HEK293 (cell line): ENCODE measurements at regions of chr17 and their contacts with region 1.

Region 1: DNA sequence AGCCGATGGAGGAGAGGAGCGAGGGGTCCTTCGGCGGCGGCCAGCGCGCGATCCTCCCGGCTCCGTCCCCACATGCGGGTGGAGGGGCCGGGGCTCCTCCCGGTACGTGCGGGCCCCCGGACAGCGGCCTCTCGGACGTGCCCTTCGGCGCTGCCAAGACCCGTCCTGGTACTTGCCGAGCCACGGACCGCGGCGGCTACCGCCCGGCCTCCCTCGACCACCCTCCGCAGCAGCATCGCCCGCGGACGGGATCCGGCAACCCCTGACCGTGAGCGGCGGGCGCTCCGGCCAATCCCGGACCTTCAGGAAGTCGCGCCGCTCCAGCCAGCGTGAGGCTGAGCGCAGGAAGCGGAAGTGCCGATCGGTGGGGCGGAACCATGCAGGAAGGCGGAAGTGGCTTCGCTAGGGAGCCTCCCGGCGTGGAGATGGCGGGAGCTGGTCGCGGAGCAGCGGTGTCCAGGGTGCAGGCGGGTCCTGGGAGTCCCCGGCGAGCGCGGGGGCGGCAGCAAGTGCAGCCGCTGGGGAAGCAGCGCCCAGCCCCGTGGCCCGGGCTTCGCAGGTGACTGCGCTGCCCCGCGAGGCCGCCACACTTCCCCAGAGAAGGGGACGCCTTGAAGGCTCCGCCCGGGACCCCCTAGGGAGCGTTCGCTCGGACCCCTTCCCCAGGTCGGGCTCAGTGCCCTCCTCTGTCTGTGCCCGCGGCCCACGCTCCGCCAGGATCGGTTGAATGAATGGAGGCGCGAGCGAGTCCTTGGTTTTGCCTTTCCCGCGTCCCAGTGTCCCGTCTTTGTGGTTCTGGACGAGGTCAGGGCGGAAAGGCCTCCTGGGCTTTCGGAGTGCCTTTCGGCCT is at the starts of genes CCDC137 and OXLD1:
- H3K4me3 ChIP-seq: peak within 1 kb of the TSS; percentile 88
- H3K27ac ChIP-seq: peak within 1 kb of the TSS; percentile 90
- H3K4me1 ChIP-seq: peaks cover 5% of the 10 kb centered on the region; the same call in 1 of the 2 replicates
- CTCF ChIP-seq: no peak

Region 2: GRCh38 chr17:81445642-81446503 is 220.7 kb before region 1 on chr17:
- CTCF ChIA-PET with region 1: no interaction called
- POLR2A ChIA-PET with region 1: no interaction called
- H3K4me3 ChIP-seq: no peak overlapping the region
- H3K27ac ChIP-seq: no peak overlapping the region
- H3K4me1 ChIP-seq: no peaks in the 10 kb centered on the region
- CTCF ChIP-seq: 0 out of 2 replicates have a peak, but pooled peaks have one; percentile 30

Region 3: DNA sequence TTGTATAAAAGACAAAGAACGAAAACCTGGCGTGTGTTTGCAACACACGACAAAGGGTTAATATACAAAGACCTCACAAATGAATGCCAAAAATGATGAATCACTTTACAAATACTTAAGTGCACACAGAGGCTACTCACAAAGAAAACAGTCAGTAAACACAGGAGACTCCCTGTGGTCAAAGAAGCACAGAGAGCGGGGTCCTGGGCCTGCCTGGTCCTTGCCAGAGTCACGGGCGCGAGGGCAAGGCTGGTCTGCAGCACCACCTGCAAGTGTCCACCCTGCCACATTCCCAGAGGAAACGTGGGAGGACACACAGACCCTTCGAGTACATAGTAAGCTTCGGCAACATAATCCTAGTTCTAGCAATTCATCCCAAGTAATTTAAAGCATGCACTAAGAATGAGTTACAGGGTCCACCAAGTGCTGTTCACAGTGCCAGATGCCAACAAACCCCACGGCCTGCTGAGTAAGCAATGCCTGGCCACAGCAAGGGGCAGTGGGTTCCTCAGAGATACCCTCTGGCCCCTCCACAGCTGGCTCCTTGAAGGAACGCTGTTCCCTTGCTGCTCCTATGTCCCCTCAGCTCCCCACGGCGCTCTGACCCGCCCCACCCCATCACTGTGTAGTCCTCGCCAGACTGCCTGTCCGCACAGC is 89.8 kb before region 1 on chr17:
- CTCF ChIA-PET with region 1: no interaction called
- POLR2A ChIA-PET with region 1: no interaction called
- H3K4me3 ChIP-seq: no peak overlapping the region
- H3K27ac ChIP-seq: peak overlapping the region; percentile 59
- H3K4me1 ChIP-seq: peaks cover 16% of the 10 kb centered on the region
- CTCF ChIP-seq: no peak

Region 4: GRCh38 chr17:81648013-81648706 is 18.4 kb before region 1 on chr17:
- CTCF ChIA-PET with region 1: interaction called, 3 read pairs
- POLR2A ChIA-PET with region 1: interaction called, 10 read pairs
- H3K4me3 ChIP-seq: no peak overlapping the region
- H3K27ac ChIP-seq: no peak overlapping the region
- H3K4me1 ChIP-seq: no peaks in the 10 kb centered on the region
- CTCF ChIP-seq: no peak

Region 5: DNA sequence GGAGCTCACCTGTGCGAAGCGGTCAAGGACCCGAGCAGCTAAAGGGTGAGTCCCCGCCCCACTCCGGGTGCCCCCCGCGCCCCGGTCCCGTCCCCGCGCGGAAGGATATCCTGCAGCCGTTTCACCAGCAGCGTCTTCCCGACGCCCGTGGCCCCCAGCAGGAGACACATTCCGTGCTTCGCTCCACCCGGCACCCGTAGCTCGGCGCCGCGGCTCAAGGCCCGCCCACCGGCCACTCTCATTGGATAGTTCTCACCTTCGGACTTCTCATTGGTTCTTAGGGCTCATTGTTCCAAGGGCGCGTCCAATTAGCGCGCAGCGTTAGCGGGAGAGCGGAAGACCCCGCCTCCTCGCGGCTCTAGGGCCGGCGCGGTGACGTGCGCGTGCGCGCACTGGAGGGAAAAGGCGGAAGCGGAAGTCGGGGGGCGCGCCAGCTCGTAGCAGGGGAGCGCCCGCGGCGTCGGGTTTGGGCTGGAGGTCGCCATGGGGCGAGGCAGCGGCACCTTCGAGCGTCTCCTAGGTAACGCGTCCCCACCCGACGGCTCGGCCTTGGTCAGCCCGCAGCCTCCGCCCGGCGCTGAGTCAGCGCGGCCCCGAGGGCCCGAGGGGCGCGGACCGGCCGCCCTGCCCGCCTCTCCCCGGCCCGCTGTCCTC is 17.1 kb after region 1 on chr17 and contains the starts of genes ARL16 and HGS:
- CTCF ChIA-PET with region 1: interaction called, 9 read pairs
- POLR2A ChIA-PET with region 1: interaction called, 28 read pairs
- H3K4me3 ChIP-seq: peak within 1 kb of the TSS; percentile 92
- H3K27ac ChIP-seq: peak within 1 kb of the TSS; percentile 82
- H3K4me1 ChIP-seq: peaks cover 4% of the 10 kb centered on the region
- CTCF ChIP-seq: no peak

Region 6: GRCh38 chr17:81695801-81696200 is 29.2 kb after region 1 on chr17:
- CTCF ChIA-PET with region 1: no interaction called
- POLR2A ChIA-PET with region 1: no interaction called
- H3K4me3 ChIP-seq: no peak overlapping the region
- H3K27ac ChIP-seq: no peak overlapping the region
- H3K4me1 ChIP-seq: no peaks in the 10 kb centered on the region
- CTCF ChIP-seq: no peak